Naive thymus-derived CD4-positive, alpha-beta T cell (primary cell): ENCODE measurements at regions of chr5 and their contacts with region 1.

Region 1: DNA sequence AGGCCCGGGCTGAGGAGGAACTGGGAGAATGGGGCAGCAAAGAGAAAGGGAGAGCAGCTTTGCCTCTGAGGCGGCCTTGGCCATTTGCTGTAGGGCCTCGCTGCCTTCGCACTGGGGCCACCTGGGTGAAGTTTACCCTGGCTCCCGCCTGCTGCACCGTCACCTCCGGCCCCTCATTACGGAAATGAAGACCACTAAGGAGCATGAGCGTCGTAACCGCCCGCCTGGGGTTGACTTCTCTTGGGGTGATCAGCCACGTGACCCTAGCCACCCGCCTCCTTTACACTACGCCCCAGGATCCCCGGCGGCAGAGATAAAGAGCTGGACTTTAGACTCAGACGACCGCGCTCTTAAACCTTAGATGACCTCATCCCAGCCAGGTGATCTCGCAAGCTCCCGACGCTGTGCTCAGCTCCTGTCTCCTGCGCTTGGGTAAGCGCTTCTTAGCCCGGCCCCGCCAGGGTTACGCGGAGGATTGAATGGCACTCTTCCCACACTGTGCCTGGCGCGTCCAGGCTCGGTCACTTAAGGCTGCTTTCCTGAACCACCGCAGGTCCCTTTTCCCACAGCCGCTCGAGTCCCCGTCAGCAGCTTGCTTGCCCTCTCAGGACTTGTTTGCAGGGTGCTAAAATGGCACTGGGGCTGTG is 107.9 kb upstream of the LARP1 start:
- DNase-seq: no peak
- ATAC-seq: peak; percentile 52
- H3K4me3 ChIP-seq: peak overlapping the region; percentile 54
- H3K4me3 Mint-ChIP-seq: peak overlapping the region; percentile 72 to 87 (median 84)
- H3K27ac ChIP-seq: no peak overlapping the region
- H3K27ac Mint-ChIP-seq: peak overlapping the region in 1 of 9 donors; percentile 59
- H3K4me1 ChIP-seq: peaks cover 0 to 3% of the 10 kb centered on the region in 2 donors
- H3K4me1 Mint-ChIP-seq: peaks cover 10 to 19% (median 16%) of the 10 kb centered on the region in 7 donors
- H3K27me3 ChIP-seq: peaks cover 0 to 12% of the 10 kb centered on the region in 2 donors
- H3K27me3 Mint-ChIP-seq: peaks cover 18 to 46% (median 28%) of the 10 kb centered on the region in 5 donors

Region 2: GRCh38 chr5:154683101-154683880 is 36.1 kb after region 1 on chr5:
- CTCF ChIA-PET with region 1: no interaction called
- POLR2A ChIA-PET with region 1: no interaction called
- intact Hi-C with region 1: loop called in 1 of 2 experiments (anchors 2 kb)
- DNase-seq: no peak
- ATAC-seq: peak; percentile 26
- H3K4me3 ChIP-seq: peak overlapping the region; percentile 48
- H3K4me3 Mint-ChIP-seq: peak overlapping the region; percentile 32 to 82 (median 76)
- H3K27ac ChIP-seq: no peak overlapping the region
- H3K27ac Mint-ChIP-seq: peak overlapping the region in 2 of 9 donors; percentile 17 to 53
- H3K4me1 ChIP-seq: peaks cover 0 to 3% of the 10 kb centered on the region in 2 donors
- H3K4me1 Mint-ChIP-seq: peaks cover 0 to 9% (median 6%) of the 10 kb centered on the region in 7 donors
- H3K27me3 ChIP-seq: peaks cover 0 to 2% of the 10 kb centered on the region in 2 donors
- H3K27me3 Mint-ChIP-seq: peaks cover 0 to 34% (median 3%) of the 10 kb centered on the region in 5 donors

Region 3: DNA sequence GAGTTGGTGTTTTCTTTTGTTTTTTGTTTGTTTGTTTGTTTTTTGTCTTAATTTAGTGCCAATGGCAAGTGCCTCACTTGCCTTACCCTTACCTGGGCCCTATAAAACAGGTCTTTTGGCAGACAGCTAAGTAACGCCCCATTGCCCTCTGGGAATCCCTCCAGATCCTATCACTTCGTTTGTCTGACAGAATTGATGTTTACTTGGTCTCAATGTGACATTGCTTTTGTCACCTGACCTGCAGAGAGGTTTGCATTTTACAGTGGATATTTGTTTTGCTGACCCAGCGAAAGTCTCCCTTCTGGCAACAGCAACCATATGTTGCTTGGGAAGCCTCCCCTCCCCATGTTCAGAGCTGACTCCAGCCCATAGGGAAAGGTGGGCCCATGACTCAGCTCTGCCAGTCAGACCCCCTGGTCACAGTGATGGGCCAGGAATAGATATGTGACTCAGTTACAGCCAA is 53.9 kb after region 1 on chr5:
- CTCF ChIA-PET with region 1: no interaction called
- POLR2A ChIA-PET with region 1: no interaction called
- intact Hi-C with region 1: no loop called
- DNase-seq: no peak
- ATAC-seq: no peak
- H3K4me3 ChIP-seq: no peak overlapping the region
- H3K4me3 Mint-ChIP-seq: no peak overlapping the region
- H3K27ac ChIP-seq: no peak overlapping the region
- H3K27ac Mint-ChIP-seq: no peak overlapping the region
- H3K4me1 ChIP-seq: no peaks in the 10 kb centered on the region
- H3K4me1 Mint-ChIP-seq: no peaks in the 10 kb centered on the region
- H3K27me3 ChIP-seq: no peaks in the 10 kb centered on the region
- H3K27me3 Mint-ChIP-seq: peaks cover 0 to 4% (median 2%) of the 10 kb centered on the region in 5 donors

Region 4: DNA sequence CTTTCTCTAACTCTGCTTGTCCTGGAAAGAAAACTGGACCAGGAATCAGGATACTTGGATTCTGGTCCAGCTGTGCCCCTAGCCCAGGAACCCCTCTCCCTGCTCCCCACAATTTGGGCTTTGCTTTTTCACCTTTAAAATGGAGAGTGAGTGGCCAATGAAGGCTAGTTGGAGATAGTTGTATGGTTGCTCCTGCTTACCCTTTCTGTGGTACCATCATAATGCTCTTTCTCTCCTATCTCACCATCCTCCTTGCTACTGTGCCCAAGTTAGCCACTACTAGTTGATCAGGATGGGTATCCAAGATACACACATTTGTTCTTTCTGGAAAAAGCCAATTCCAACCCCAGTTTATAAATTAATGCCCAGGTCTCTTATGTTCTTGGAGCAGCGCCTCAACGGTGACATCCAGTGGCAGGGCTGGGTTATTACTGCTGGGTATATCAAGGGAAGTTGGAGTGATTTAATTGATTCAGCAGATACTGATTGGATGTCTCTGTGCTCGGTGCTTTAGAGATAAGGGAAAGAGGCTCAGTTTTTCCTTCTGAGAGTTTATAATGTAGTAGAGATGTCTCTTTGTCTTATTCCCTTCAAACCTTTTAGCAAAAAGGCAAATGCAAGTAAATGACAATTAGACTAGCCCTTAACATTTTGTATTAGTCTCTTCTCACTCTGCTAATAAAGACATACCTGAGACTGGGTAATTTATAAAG is 164.6 kb after region 1 on chr5:
- CTCF ChIA-PET with region 1: interaction called, 5 read pairs
- POLR2A ChIA-PET with region 1: no interaction called
- intact Hi-C with region 1: loop called (anchors 1 kb)
- DNase-seq: peak; percentile 30 to 68 (median 58)
- ATAC-seq: peak; percentile 88
- H3K4me3 ChIP-seq: no peak overlapping the region
- H3K4me3 Mint-ChIP-seq: peak overlapping the region in 4 of 10 donors; percentile 10 to 47 (median 23)
- H3K27ac ChIP-seq: no peak overlapping the region
- H3K27ac Mint-ChIP-seq: peak overlapping the region; percentile 1 to 82 (median 55)
- H3K4me1 ChIP-seq: peaks cover 15 to 18% of the 10 kb centered on the region in 2 donors
- H3K4me1 Mint-ChIP-seq: peaks cover 21 to 46% (median 36%) of the 10 kb centered on the region in 7 donors
- H3K27me3 ChIP-seq: no peaks in the 10 kb centered on the region
- H3K27me3 Mint-ChIP-seq: no peaks in the 10 kb centered on the region

Region 5: DNA sequence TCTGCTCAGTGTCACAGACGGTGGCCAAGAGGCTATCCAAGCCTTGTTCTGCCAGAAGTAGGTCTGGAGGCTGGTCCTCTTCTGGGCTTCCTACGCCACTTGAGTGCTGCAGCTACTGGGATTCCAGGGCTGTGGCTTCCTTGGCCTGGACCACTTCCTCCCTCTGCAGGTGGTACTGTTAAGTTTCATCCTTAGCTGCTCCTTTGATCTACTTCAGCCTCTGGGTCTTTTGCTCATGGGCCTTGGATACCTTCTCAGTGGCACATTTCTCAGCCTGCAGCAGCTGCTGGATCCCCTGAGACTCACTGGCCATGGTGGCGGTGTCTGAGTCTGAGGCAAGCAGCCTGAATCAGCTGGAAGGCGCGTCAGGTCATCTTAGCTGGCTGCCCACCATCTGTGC is 221.5 kb after region 1 on chr5:
- CTCF ChIA-PET with region 1: interaction called, 4 read pairs
- POLR2A ChIA-PET with region 1: interaction called, 3 read pairs
- intact Hi-C with region 1: loop called (anchors 1 kb)
- DNase-seq: peak in 1 of 9 donors; percentile 32
- ATAC-seq: peak; percentile 50
- H3K4me3 ChIP-seq: no peak overlapping the region
- H3K4me3 Mint-ChIP-seq: no peak overlapping the region
- H3K27ac ChIP-seq: peak overlapping the region; percentile 35
- H3K27ac Mint-ChIP-seq: peak overlapping the region in 7 of 9 donors; percentile 13 to 65 (median 59)
- H3K4me1 ChIP-seq: no peaks in the 10 kb centered on the region
- H3K4me1 Mint-ChIP-seq: peaks cover 10 to 29% (median 23%) of the 10 kb centered on the region in 7 donors
- H3K27me3 ChIP-seq: no peaks in the 10 kb centered on the region
- H3K27me3 Mint-ChIP-seq: no peaks in the 10 kb centered on the region

Region 6: GRCh38 chr5:154901913-154902312 is 254.7 kb after region 1 on chr5:
- CTCF ChIA-PET with region 1: interaction called, 3 read pairs
- POLR2A ChIA-PET with region 1: no interaction called
- intact Hi-C with region 1: loop called in 1 of 2 experiments (anchors 2 kb)
- DNase-seq: no peak
- ATAC-seq: no peak
- H3K4me3 ChIP-seq: no peak overlapping the region
- H3K4me3 Mint-ChIP-seq: no peak overlapping the region
- H3K27ac ChIP-seq: no peak overlapping the region
- H3K27ac Mint-ChIP-seq: no peak overlapping the region
- H3K4me1 ChIP-seq: no peaks in the 10 kb centered on the region
- H3K4me1 Mint-ChIP-seq: no peaks in the 10 kb centered on the region
- H3K27me3 ChIP-seq: no peaks in the 10 kb centered on the region
- H3K27me3 Mint-ChIP-seq: no peaks in the 10 kb centered on the region

Region 7: GRCh38 chr5:155004138-155004744 is 357.0 kb after region 1 on chr5:
- CTCF ChIA-PET with region 1: no interaction called
- POLR2A ChIA-PET with region 1: no interaction called
- intact Hi-C with region 1: loop called in 1 of 2 experiments (anchors 2 kb)
- DNase-seq: peak in 2 of 9 donors; percentile 2 to 27
- ATAC-seq: peak; percentile 29
- H3K4me3 ChIP-seq: no peak overlapping the region
- H3K4me3 Mint-ChIP-seq: no peak overlapping the region
- H3K27ac ChIP-seq: no peak overlapping the region
- H3K27ac Mint-ChIP-seq: no peak overlapping the region
- H3K4me1 ChIP-seq: no peaks in the 10 kb centered on the region
- H3K4me1 Mint-ChIP-seq: no peaks in the 10 kb centered on the region
- H3K27me3 ChIP-seq: no peaks in the 10 kb centered on the region
- H3K27me3 Mint-ChIP-seq: peaks cover 2 to 43% (median 30%) of the 10 kb centered on the region in 5 donors